Adrenal gland (tissue), 19 donors: ENCODE measurements at regions of chrX and their contacts with region 1.

Region 1: DNA sequence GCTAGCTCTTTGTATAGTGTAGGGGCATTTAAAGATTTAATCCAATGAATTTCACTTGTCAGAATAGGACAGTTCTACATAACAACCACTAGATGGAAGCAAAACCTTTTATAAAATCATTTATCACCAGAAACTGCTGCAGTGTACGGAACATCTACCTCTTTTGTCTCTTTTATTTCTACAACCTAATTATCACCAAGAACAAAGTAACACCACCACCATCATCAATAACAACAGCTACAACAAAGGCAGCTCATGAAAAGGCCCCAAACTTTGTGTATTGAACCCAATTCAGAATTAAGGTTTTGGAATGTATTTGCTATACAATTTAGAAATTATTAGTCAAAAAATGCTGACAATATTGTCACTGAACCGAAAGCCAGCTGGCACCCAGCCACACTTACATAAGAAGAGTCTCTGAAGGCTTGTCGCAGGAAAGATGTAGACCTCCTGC is 260.9 kb upstream of the RPS6KA3 start:
- DNase-seq: peak in 4 of 7 donors; percentile 16 to 66 (median 30)
- H3K4me3 ChIP-seq: no peak overlapping the region
- H3K27ac ChIP-seq: no peak overlapping the region
- H3K4me1 ChIP-seq: peaks cover 0 to 7% of the 10 kb centered on the region in 2 donors
- H3K27me3 ChIP-seq: peaks cover 13% of the 10 kb centered on the region
- CTCF ChIP-seq: peak; percentile 45 to 80 (median 62)
- POLR2A ChIP-seq: no peak

Region 2: DNA sequence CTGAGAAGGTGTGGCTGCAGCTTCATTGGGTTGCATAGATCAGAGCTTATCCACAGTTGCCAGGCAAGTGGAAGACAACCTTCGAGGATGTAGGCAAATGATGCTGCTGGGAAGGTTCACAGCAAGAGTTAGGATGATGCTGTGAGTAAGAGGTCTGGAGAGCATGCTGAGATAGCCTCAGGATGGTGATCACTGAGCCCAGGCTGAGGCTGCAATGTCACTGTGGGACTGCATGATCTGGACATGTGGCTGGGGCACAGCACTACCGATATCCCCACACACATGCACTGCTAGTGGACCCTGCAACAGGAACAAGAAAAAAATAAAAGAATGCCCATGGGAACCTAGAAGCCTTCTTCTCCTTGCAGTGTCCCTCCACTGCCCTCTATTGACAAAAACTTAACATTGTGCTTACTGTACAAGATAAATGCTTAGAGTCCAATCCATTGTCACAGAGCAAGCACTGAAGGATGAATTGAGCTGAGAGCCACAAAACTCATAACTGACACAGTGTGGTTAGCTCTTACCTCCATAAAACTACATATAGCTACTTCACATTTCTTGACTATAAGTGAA is 952.2 kb after region 1 on chrX:
- intact Hi-C with region 1: loop called in 1 of 2 experiments (anchors 10 kb)
- DNase-seq: peak in 1 of 7 donors; percentile 1
- H3K4me3 ChIP-seq: no peak overlapping the region
- H3K27ac ChIP-seq: no peak overlapping the region
- H3K4me1 ChIP-seq: no peaks in the 10 kb centered on the region
- H3K27me3 ChIP-seq: peaks cover 3% of the 10 kb centered on the region
- CTCF ChIP-seq: peak; percentile 35 to 57 (median 45)
- POLR2A ChIP-seq: no peak

Region 3: DNA sequence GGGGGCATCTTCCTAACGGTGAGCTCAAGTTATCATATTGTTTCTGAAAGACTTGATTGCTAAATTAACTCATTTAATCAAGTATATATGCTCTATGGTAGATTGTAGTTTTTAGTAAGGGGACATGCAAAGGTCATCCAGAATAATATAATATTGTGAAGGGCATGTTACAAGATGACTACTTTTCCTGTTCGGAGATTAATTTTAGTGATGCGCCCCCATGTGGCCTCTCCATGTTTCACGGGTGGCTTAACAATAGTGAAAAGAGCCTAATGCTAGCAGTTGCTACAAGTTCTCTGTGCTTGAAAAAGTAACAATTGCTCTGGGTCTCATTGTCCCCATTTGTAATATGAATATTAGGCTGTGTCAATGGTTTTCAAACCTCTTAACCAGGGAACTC is 1218.2 kb after region 1 on chrX:
- intact Hi-C with region 1: loop called in 1 of 2 experiments (anchors 10 kb)
- DNase-seq: peak in 6 of 7 donors; percentile 28 to 78 (median 57)
- H3K4me3 ChIP-seq: no peak overlapping the region
- H3K27ac ChIP-seq: no peak overlapping the region
- H3K4me1 ChIP-seq: no peaks in the 10 kb centered on the region
- H3K27me3 ChIP-seq: peaks cover 7% of the 10 kb centered on the region
- CTCF ChIP-seq: peak; percentile 33 to 65 (median 43)
- POLR2A ChIP-seq: no peak